Activated B cell treated with CpG ODN at 0.5 μM for 24 hours (primary cell): ENCODE measurements at regions of chr5 and their contacts with region 1.

Region 1: DNA sequence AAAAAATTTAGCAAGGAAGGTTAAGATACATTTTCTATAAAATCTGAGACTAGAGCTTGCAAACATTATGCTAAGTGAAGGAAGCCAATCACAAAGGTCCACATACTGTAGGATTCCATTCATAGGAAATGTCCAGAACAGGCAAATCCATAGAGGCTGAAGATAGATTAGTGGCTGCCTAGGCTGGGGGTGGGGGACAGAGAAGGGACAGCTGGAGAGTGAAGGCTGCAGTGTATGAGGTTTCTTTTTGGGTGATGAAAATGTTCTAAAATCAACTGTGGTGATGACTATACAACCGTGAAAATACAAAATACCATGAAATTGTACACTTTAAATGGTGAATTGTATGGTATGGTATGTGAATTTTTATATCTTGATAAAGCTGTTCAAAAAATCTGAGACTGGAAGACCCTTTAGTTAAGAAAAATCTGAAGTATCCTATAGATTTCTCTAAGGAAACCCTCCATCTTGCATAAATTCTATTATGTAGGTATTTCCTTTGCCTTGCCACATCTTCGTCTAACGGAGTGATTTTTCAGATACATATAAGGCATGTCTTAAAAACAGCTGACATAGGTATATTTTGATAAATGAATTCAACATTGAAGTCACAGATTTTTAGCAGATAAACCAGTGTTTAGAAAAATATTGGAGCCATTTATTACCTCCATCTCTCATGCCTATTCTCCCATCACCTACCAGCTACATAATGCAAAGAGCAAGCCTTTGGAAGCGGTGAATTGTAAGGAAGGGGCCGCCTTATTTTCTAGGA is 121.1 kb downstream of the LMNB1 start:
- DNase-seq: no peak
- ATAC-seq: no peak
- H3K4me3 Mint-ChIP-seq: no peak overlapping the region
- H3K27ac Mint-ChIP-seq: no peak overlapping the region
- H3K4me1 Mint-ChIP-seq: no peaks in the 10 kb centered on the region
- H3K27me3 Mint-ChIP-seq: no peaks in the 10 kb centered on the region
- CTCF ChIP-seq: no peak

Region 2: GRCh38 chr5:126884269-126884819 is 13.7 kb before region 1 on chr5:
- CTCF ChIA-PET with region 1: no interaction called
- POLR2A ChIA-PET with region 1: no interaction called
- intact Hi-C with region 1: loop called (anchors 1 kb)
- DNase-seq: no peak
- ATAC-seq: no peak
- H3K4me3 Mint-ChIP-seq: no peak overlapping the region
- H3K27ac Mint-ChIP-seq: no peak overlapping the region
- H3K4me1 Mint-ChIP-seq: no peaks in the 10 kb centered on the region
- H3K27me3 Mint-ChIP-seq: no peaks in the 10 kb centered on the region
- CTCF ChIP-seq: no peak

Region 3: DNA sequence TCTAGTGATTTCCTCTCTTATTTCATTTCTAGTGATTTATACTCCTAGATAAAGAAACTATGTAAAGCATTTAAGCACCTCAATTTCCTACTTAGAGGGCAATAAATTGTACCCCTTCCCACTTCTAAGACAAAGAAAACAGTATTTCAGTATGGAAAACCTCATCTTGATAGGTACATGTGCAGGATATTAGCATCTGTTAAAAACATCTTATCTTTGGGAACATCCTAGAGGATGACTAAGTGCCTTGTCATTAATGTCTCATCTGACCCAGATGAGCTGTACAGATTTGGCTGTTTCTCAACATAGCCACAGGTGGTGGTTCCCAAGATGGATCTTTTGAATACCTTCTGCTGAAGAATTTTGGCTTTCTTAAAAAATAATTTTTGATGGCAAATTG is 398.3 kb after region 1 on chr5:
- CTCF ChIA-PET with region 1: no interaction called
- POLR2A ChIA-PET with region 1: no interaction called
- intact Hi-C with region 1: no loop called
- DNase-seq: no peak
- ATAC-seq: no peak
- H3K4me3 Mint-ChIP-seq: no peak overlapping the region
- H3K27ac Mint-ChIP-seq: no peak overlapping the region
- H3K4me1 Mint-ChIP-seq: peaks cover 1% of the 10 kb centered on the region
- H3K27me3 Mint-ChIP-seq: peaks cover 35% of the 10 kb centered on the region
- CTCF ChIP-seq: no peak